ENCODE measurements at regions of chr4 and their contacts with region 1.

Region 1: DNA sequence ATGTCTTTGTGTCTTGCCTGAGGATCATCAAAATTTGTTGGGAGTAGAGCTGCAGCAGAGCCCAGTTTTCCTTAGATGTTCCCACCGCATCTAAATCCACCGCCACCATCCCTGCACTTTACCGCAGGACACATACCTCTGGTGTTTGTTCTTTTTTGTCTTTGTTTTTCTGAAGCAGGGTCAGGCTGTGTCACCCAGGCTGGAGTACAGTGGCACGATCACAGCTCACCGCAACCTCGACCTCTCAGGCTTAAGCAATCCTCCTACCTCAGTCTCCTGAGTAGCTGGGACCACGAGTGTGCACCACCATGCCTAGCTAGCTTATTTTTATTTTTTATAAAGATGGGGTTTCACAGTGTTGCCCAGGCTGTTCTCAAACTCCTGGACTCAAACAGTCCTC is 4.6 kb downstream of the ENOPH1 start:
- DNase-seq: no peak
- ATAC-seq: no peak
- H3K4me3 Mint-ChIP-seq: no peak overlapping the region
- H3K27ac Mint-ChIP-seq: no peak overlapping the region
- H3K4me1 Mint-ChIP-seq: peaks cover 43% of the 10 kb centered on the region
- H3K27me3 Mint-ChIP-seq: no peaks in the 10 kb centered on the region
- CTCF ChIP-seq: no peak

Region 2: GRCh38 chr4:81162752-81163458 is 1272.0 kb before region 1 on chr4:
- CTCF ChIA-PET with region 1: no interaction called
- POLR2A ChIA-PET with region 1: no interaction called
- intact Hi-C with region 1: no loop called
- DNase-seq: no peak
- ATAC-seq: no peak
- H3K4me3 Mint-ChIP-seq: no peak overlapping the region
- H3K27ac Mint-ChIP-seq: no peak overlapping the region
- H3K4me1 Mint-ChIP-seq: no peaks in the 10 kb centered on the region
- H3K27me3 Mint-ChIP-seq: no peaks in the 10 kb centered on the region
- CTCF ChIP-seq: no peak

Region 3: DNA sequence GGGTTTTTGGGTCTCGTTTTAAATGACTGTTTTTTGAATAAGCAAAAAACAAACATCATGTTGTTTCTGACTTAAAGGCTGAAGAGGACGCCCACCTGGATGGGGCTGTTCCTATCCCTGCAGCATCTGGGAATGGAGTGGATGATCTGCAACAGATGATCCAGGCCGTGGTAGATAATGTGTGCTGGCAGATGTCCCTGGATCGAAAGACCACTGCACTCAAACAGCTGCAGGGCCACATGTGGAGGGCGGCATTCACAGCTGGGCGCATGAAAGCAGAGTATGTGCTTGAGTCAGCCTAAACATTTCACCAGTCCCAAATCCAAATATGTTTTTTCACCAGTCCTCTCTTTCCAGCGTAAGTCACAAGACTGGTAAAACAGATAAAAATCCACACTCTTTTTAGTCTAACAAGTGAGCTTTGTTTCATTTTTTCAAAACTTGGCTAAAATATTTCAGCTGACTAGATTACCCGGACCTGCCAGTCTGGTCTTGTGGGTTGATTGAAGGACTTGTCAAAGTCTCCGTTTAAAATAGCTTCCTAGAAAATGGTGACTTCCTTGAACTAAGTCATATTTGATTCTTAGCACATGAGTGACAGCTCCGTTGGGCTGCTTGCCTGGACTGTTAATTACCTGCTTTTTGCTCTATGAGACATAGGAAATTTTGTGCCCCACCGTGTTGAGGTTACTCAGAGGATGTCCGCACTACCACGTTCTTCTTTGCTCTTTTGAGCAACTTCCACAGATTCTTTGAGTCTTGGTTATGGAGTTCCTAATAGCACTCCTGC is 16.2 kb after region 1 on chr4:
- CTCF ChIA-PET with region 1: no interaction called
- POLR2A ChIA-PET with region 1: interaction called, 11 read pairs
- intact Hi-C with region 1: no loop called
- DNase-seq: no peak
- ATAC-seq: no peak
- H3K4me3 Mint-ChIP-seq: no peak overlapping the region
- H3K27ac Mint-ChIP-seq: no peak overlapping the region
- H3K4me1 Mint-ChIP-seq: no peaks in the 10 kb centered on the region
- H3K27me3 Mint-ChIP-seq: no peaks in the 10 kb centered on the region
- CTCF ChIP-seq: no peak

Measured in activated B cell treated with CpG ODN at 0.5 μM for 24 hours (primary cell).